ENCODE measurements at regions of chr17 and their contacts with region 1.

Region 1: DNA sequence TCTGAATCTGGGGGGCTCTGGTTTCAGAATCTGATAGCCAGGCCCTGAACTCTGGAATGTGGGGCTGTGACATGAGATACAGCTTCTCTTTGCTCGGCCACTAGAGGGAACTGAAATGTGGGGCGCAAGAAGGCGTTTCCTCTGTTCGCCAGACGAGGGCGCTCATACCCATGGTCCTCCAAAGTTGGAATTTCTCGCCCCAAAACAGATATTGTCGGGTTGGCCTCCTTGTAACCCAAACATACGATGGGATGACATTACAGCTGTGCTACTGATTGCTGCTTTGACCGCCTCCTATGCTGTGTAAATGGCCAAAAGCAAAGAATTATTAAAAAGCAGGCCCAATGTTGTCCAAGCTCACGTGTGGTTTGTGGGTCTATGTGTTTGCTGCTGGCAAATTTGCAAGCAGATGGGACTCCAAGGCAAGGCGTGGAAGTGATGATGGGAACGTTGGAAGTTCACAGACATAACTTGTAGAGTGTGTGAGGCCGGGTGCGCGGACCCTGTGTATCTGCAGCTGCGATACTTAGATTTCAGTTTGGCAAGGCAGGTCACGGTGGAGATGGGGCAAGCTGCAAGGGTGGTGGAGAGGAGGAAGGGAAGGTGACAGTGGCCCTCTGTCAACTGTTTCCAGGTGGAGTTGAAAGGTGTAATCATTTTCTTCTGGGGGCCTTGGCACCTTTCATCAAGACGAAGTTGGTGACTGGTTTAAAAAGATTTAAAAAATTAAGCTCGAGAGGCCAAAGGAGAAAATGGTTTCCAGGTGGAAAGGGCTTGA is 13.0 kb upstream of the MSI2 start:
- DNase-seq: peak; percentile 45
- H3K4me3 ChIP-seq: no peak overlapping the region
- H3K27ac ChIP-seq: peak overlapping the region; percentile 53
- H3K4me1 ChIP-seq: peaks cover 16% of the 10 kb centered on the region
- H3K27me3 ChIP-seq: no peaks in the 10 kb centered on the region
- CTCF ChIP-seq: peak; percentile 98

Region 2: DNA sequence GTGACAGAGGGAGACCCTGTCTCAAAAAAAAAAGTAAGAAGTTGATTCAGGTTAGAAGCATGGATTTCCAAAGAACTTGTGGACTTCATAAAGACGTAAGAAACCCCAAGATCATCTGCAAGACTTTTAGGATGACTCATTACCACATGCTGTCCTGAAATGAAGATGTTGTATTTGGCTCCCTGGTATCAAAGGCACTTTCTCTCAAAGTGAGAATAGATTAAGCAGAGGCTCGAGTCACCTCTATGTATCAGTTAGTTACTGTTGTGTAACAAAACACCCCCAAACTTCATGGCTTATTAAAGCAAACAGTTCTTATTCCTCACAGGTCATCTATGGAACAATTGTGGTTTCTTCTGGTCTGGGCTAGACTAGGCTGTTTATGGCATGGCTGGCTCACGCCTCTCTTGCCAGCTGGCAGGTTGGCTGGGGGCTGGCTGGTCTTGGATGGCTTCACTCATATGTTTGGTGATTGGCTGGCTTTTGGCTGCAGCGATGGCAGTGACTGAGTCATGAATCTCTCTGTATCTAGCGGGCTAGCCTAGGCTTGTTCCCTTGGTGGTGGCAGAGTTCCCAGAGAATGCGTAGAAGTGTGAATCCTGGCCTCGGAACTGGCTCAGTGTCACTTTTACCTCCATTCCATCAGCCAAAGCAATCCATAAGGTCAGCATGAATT is 47.4 kb before region 1 on chr17:
- intact Hi-C with region 1: no loop called
- DNase-seq: no peak
- H3K4me3 ChIP-seq: no peak overlapping the region
- H3K27ac ChIP-seq: no peak overlapping the region
- H3K4me1 ChIP-seq: no peaks in the 10 kb centered on the region
- H3K27me3 ChIP-seq: peaks cover 9% of the 10 kb centered on the region
- CTCF ChIP-seq: no peak

Region 3: GRCh38 chr17:57440522-57441485 is 197.4 kb after region 1 on chr17:
- intact Hi-C with region 1: loop called (anchors 10 kb)
- DNase-seq: peak; percentile 73
- H3K4me3 ChIP-seq: peak overlapping the region; percentile 27
- H3K27ac ChIP-seq: peak overlapping the region; percentile 77
- H3K4me1 ChIP-seq: peaks cover 82% of the 10 kb centered on the region
- H3K27me3 ChIP-seq: no peaks in the 10 kb centered on the region
- CTCF ChIP-seq: peak; percentile 64

Region 4: DNA sequence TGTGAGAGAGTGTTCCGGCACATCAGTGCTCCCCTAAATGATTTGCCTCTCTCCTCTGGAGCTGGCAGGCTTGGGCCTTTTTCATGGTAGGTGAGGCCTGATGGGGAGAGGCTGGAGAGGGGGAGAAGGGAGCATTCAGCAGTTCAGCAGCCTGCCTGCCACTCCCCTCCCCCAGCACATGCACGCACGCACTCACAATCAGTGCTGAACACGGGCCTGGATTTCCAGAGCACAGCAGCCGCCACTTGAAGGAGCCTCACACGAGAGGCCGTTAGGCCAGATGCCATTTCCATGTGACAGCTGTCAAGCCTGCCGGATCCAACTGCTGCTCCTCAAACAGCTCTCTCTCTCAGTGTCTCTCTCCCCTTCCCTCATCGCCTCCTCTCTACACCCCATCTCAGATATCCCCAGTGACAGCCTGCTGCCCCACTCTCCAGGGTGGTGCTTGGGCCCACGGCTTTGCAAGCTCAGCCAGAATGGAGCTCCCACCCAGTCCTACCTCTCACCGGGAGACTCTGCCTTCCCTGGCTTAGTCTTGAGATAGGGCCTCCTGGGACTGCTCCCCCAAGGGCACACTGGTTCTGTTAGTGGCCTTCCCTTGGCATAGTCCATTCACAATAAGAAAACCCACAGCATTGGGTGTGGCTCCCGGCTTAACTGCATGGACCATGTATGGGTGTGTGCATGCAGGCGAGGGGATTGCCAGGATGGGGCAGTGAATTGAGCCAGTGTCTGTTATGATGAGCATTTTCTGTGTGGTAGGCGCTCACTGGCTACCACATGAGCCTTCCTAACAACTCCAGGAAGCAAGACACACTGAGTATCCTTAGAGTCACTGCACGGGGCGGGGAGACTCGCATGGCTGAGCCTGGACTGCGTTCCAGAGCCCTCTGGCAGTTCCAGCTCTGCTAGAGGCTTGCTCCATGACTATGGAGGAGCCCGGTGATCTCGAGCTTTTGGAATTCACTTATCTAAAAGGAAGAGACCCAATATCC is 275.5 kb after region 1 on chr17:
- intact Hi-C with region 1: loop called (anchors 10 kb)
- DNase-seq: peak; percentile 66
- H3K4me3 ChIP-seq: no peak overlapping the region
- H3K27ac ChIP-seq: peak overlapping the region; percentile 34
- H3K4me1 ChIP-seq: peaks cover 51% of the 10 kb centered on the region
- H3K27me3 ChIP-seq: no peaks in the 10 kb centered on the region
- CTCF ChIP-seq: no peak

Region 5: GRCh38 chr17:57747221-57748017 is 504.1 kb after region 1 on chr17:
- intact Hi-C with region 1: loop called (anchors 10 kb)
- DNase-seq: no peak
- H3K4me3 ChIP-seq: no peak overlapping the region
- H3K27ac ChIP-seq: no peak overlapping the region
- H3K4me1 ChIP-seq: peaks cover 4% of the 10 kb centered on the region
- H3K27me3 ChIP-seq: peaks cover 39% of the 10 kb centered on the region
- CTCF ChIP-seq: peak; percentile 84